Caco-2 (cell line): ENCODE measurements at regions of chr5 and their contacts with region 1.

Region 1: GRCh38 chr5:43389679-43390329 is 22.4 kb downstream of the CCL28 start:
- DNase-seq: peak; percentile 67 to 86
- H3K4me3 ChIP-seq: no peak overlapping the region
- H3K4me3 Mint-ChIP-seq: no peak overlapping the region
- H3K27ac Mint-ChIP-seq: no peak overlapping the region
- H3K4me1 ChIP-seq: peaks cover 5% of the 10 kb centered on the region; the same call in 1 of the 2 replicates
- H3K4me1 Mint-ChIP-seq: peaks cover 14% of the 10 kb centered on the region
- H3K27me3 ChIP-seq: no peaks in the 10 kb centered on the region
- H3K27me3 Mint-ChIP-seq: no peaks in the 10 kb centered on the region
- CTCF ChIP-seq: peak; percentile 80 to 86

Region 2: GRCh38 chr5:43105369-43106289 is 284.2 kb before region 1 on chr5:
- CTCF ChIA-PET with region 1: no interaction called
- POLR2A ChIA-PET with region 1: no interaction called
- intact Hi-C with region 1: loop called (anchors 1 kb)
- DNase-seq: peak; percentile 93
- H3K4me3 ChIP-seq: peak overlapping the region; percentile 21
- H3K4me3 Mint-ChIP-seq: peak overlapping the region; percentile 68
- H3K27ac Mint-ChIP-seq: peak overlapping the region; percentile 49
- H3K4me1 ChIP-seq: peaks cover 8% of the 10 kb centered on the region; the same call in 1 of the 2 replicates
- H3K4me1 Mint-ChIP-seq: peaks cover 8% of the 10 kb centered on the region
- H3K27me3 ChIP-seq: no peaks in the 10 kb centered on the region
- H3K27me3 Mint-ChIP-seq: no peaks in the 10 kb centered on the region
- CTCF ChIP-seq: peak; percentile 99 to 100

Region 3: GRCh38 chr5:43305948-43306565 is 83.7 kb before region 1 on chr5:
- CTCF ChIA-PET with region 1: interaction called, 5 read pairs
- POLR2A ChIA-PET with region 1: no interaction called
- intact Hi-C with region 1: loop called (anchors 1 kb)
- DNase-seq: peak in 1 of 2 experiments; percentile 55
- H3K4me3 ChIP-seq: no peak overlapping the region
- H3K4me3 Mint-ChIP-seq: no peak overlapping the region
- H3K27ac Mint-ChIP-seq: no peak overlapping the region
- H3K4me1 ChIP-seq: peaks cover 31% of the 10 kb centered on the region
- H3K4me1 Mint-ChIP-seq: peaks cover 25% of the 10 kb centered on the region
- H3K27me3 ChIP-seq: no peaks in the 10 kb centered on the region
- H3K27me3 Mint-ChIP-seq: no peaks in the 10 kb centered on the region
- CTCF ChIP-seq: peak; percentile 66 to 74

Region 4: DNA sequence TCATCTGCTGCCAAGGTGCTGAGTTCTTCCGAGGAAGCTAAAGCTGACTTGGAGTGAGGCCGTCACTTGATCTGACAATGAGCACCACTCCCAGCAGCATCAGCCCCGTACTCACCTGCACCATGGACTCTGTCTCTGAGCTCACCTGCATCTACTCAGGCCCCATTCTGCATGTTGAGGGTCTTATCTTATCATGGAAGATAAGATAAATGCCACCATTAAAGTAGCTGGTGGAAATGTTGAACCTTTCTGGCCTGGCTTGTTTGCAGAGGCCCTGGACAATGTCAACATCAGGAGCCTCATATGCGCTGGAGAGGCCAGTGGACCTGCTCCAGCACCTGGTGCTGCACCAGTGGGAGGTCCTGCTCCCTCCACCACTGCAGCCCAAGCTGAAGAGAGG is 41.6 kb before region 1 on chr5:
- CTCF ChIA-PET with region 1: interaction called, 7 read pairs
- POLR2A ChIA-PET with region 1: no interaction called
- intact Hi-C with region 1: loop called (anchors 1 kb)
- DNase-seq: peak; percentile 84 to 92
- H3K4me3 ChIP-seq: no peak overlapping the region
- H3K4me3 Mint-ChIP-seq: peak overlapping the region; percentile 49
- H3K27ac Mint-ChIP-seq: peak overlapping the region; percentile 65
- H3K4me1 ChIP-seq: peaks cover 45% of the 10 kb centered on the region
- H3K4me1 Mint-ChIP-seq: peaks cover 35% of the 10 kb centered on the region
- H3K27me3 ChIP-seq: no peaks in the 10 kb centered on the region
- H3K27me3 Mint-ChIP-seq: no peaks in the 10 kb centered on the region
- CTCF ChIP-seq: no peak

Region 5: GRCh38 chr5:43523662-43524072 is 133.9 kb after region 1 on chr5:
- CTCF ChIA-PET with region 1: no interaction called
- POLR2A ChIA-PET with region 1: no interaction called
- intact Hi-C with region 1: no loop called
- DNase-seq: no peak
- H3K4me3 ChIP-seq: no peak overlapping the region
- H3K4me3 Mint-ChIP-seq: no peak overlapping the region
- H3K27ac Mint-ChIP-seq: no peak overlapping the region
- H3K4me1 ChIP-seq: no peaks in the 10 kb centered on the region
- H3K4me1 Mint-ChIP-seq: no peaks in the 10 kb centered on the region
- H3K27me3 ChIP-seq: no peaks in the 10 kb centered on the region
- H3K27me3 Mint-ChIP-seq: no peaks in the 10 kb centered on the region
- CTCF ChIP-seq: no peak